ENCODE measurements at regions of chr13 and their contacts with region 1.

Region 1: DNA sequence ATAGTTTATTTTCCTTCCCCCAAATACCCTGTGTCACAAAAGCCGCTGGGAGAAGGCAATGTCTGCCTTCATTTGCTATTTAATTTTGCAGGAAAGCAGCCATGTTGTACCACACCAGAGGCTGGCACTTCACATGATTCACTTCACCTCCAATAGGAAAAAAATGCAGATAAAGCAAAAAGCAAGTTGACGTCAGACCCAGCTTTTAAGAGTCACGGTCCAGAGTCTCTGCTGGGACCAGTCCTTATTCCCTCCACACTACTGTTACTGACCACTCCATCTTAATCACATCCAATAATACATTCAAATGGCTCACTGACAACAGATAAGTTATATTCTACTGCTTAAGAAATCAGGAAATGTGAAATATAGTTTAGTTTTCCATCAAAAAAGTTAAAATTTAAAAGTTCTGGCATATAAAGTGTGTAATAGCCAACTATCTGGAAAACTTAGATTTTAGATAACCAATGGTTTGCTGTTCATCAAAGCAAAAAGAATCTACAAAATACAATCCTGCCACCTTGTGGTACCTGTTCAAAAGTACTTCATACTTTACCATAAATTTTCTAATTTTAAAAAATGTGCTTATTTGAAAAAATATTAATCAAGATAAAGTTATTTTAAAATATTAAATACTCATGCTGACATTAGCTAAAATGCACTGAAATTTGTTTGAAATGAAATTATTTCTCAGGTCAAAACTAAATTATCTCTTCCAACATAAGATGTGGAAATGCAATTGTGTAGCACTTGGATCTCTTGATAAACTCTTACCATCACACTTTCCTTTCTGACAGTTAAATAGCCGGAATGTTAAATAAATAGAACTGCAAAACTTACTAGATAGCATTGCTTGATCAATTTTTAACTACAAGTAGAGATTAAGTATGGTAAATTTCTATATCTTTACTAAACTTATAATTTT is 97.3 kb downstream of the SERP2 start:
- ATAC-seq: no peak
- H3K4me3 ChIP-seq: no peak overlapping the region
- H3K27ac ChIP-seq: no peak overlapping the region
- H3K4me1 ChIP-seq: peaks cover 0 to 3% of the 10 kb centered on the region in 2 donors

Region 2: GRCh38 chr13:44050450-44051063 is 420.3 kb before region 1 on chr13:
- in situ Hi-C with region 1: loop called in 1 of 9 experiments (anchors 25 kb)
- ATAC-seq: no peak
- H3K4me3 ChIP-seq: no peak overlapping the region
- H3K27ac ChIP-seq: no peak overlapping the region
- H3K4me1 ChIP-seq: peaks cover 30 to 40% of the 10 kb centered on the region in 2 donors

Region 3: DNA sequence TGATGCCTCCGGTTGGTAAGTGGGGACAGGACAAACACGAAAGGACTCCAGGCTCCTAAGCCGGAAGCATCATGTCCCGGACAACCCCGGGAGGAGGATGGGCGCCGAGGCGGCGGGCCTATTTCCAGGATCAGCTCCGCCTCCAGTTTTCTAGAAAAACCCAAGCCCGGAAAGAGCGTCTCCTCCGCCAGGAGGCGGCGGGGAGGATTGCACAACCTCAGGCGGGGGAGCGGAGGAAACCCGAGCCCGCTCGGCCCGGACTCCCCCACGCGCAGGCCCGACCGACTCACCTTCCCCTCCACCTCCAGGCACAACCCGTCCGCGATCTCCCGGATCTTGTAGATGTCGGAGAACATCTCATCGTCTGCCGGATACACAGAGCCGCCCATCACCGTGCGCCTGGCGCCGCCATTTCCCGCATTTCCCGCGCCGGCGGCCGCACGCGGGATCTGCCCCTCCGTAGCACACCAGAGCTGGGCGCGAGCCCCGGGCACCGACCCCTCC is 869.6 kb after region 1 on chr13:
- in situ Hi-C with region 1: no loop called
- ATAC-seq: peak; percentile 30 to 52 (median 40)
- H3K4me3 ChIP-seq: peak overlapping the region; percentile 80 to 92 (median 85)
- H3K27ac ChIP-seq: peak overlapping the region; percentile 96 to 98
- H3K4me1 ChIP-seq: peaks cover 11 to 21% of the 10 kb centered on the region in 2 donors